ENCODE measurements at regions of chr14 and their contacts with region 1.

Region 1: DNA sequence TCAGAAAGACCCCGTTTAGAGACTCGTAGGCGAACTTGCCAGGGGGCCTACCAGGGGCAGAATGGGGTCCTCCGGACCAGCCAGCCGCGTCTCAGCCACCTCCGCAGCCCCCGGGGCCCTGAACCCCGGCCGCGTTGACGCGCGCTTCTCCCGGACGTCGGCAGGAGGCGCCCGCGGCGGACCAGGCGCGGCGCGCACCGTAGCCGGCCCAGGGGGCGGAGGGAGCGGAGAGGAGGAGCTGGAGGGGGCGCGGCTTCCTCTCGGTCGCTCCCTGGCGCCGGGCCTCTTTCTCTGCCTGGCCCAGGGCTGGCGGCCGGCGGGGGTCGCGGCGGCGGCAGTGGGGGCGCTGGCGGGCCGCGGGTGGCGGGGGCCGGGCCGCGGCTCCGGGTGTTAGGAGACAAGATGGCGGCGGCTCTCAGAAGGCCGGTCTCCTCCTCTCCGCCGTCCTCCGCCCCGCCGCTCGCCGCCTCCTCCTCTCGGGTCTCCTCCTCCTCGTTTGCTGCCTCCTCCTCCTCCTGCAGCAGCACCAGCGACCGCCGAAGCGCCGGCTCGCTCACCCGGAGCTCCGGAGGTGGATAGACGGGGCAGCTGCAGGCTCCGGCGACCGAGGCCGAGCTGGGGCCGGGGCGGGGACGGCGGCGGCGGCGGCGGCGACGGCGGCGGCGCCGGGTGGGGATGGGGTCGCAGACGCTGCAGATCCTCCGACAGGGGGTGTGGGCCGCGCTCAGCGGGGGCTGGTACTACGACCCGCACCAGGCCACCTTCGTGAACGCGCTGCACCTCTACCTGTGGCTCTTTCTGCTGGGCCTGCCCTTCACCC is at the start of gene PCNX1:
- DNase-seq: peak; percentile 85 to 87
- ATAC-seq: peak; percentile 85
- H3K4me3 ChIP-seq: peak within 1 kb of the TSS; percentile 89
- H3K27ac ChIP-seq: peak within 1 kb of the TSS; percentile 95
- H3K4me1 ChIP-seq: peaks cover 19% of the 10 kb centered on the region
- CTCF ChIP-seq: peak; percentile 89
- EP300 ChIP-seq: no peak
- POLR2A ChIP-seq: peak; percentile 55
- RAD21 ChIP-seq: peak; percentile 29 to 71; a peak in 4 of 5 replicates
- polyA plus RNA-seq, gene PCNX1: 45.0 and 50.0 TPM in 2 replicates

Region 2: GRCh38 chr14:70152704-70153103 is 754.7 kb before region 1 on chr14:
- CTCF ChIA-PET with region 1: no interaction called
- POLR2A ChIA-PET with region 1: no interaction called
- DNase-seq: no peak
- ATAC-seq: no peak
- H3K4me3 ChIP-seq: no peak overlapping the region
- H3K27ac ChIP-seq: no peak overlapping the region
- H3K4me1 ChIP-seq: no peaks in the 10 kb centered on the region
- CTCF ChIP-seq: no peak
- EP300 ChIP-seq: no peak
- POLR2A ChIP-seq: no peak
- RAD21 ChIP-seq: no peak

Region 3: DNA sequence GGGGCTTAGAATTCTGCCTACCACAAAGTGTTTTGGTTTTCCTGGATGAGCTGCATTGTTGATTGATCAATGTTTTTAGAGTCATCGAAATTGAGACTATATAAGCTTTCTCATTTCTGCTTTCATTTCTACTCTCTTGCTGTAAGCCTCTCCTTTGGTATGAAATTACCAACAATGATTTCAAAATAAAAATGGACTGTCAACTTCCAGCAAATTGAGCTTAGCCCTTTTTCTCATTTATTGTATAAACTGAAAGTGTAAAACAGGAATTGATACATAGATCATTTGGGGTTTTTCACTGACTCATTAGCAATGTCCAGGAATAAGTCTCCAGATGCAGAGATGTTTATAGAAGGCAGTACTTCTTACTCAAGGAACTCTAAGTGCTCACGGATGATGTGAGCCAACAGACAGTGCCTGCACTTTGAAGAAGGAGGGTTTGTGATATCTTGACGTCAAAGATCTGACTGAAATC is 20.1 kb before region 1 on chr14:
- CTCF ChIA-PET with region 1: interaction called, 16 read pairs
- POLR2A ChIA-PET with region 1: interaction called, 4 read pairs
- DNase-seq: no peak
- ATAC-seq: no peak
- H3K4me3 ChIP-seq: no peak overlapping the region
- H3K27ac ChIP-seq: no peak overlapping the region; a peak in 1 of 6 replicates
- H3K4me1 ChIP-seq: no peaks in the 10 kb centered on the region
- CTCF ChIP-seq: no peak
- EP300 ChIP-seq: no peak
- POLR2A ChIP-seq: no peak
- RAD21 ChIP-seq: no peak

Region 4: DNA sequence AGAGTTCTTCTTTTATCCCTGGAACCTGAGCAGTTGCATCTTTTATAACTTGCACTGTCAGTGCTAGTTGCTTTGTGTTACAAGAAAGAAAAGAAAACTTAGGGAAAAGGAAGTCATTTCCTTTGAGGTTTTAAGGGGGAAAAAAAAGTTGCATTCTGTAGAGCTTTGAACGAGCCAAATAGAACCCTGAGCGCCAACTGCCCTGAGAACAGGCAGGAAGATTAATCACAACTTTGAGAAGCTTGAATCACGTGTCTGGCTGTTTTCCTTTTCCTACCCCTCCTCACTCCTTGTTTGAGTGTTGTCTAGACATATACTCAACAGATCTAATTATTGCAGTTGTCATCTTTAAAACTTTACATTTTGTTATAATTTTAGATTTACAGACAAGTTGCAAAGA is 12.4 kb after region 1 on chr14:
- CTCF ChIA-PET with region 1: interaction called, 18 read pairs
- POLR2A ChIA-PET with region 1: interaction called, 13 read pairs
- DNase-seq: no peak
- ATAC-seq: no peak
- H3K4me3 ChIP-seq: no peak overlapping the region
- H3K27ac ChIP-seq: no peak overlapping the region
- H3K4me1 ChIP-seq: peaks cover 29% of the 10 kb centered on the region
- CTCF ChIP-seq: no peak
- EP300 ChIP-seq: no peak
- POLR2A ChIP-seq: no peak
- RAD21 ChIP-seq: no peak

Region 5: DNA sequence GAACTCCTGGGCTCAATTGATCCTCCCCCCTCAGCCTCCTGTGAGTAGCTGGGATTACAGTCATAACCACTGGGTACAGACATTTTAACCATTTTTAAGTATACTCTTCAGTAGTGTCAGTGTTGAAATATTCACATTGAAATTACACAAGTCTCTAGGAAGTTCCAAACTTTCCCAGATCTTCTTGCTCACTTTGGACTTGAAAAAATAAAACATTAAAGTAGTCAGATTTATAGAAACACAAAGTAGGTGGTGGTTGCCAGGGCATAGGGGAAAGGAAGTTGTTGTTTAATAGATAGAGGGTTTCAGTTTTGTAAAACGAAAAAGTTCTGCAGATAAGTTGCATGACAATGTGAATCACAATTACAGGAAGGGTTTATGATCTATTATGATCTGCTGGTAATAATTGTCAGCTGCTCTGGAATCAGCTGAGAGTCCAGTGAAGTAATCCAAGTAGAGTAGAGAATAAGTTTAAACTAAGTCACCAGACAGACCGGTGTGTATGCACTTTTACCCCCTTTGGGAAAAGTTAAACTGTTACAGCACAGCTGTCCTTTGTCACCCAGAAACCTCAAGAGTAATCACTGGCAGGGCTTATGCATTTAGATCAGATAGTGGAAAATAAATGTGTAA is 27.2 kb after region 1 on chr14:
- CTCF ChIA-PET with region 1: interaction called, 13 read pairs
- POLR2A ChIA-PET with region 1: no interaction called
- DNase-seq: no peak
- ATAC-seq: peak; percentile 34 to 36; a peak in 2 of 6 replicates
- H3K4me3 ChIP-seq: no peak overlapping the region
- H3K27ac ChIP-seq: no peak overlapping the region
- H3K4me1 ChIP-seq: peaks cover 21% of the 10 kb centered on the region
- CTCF ChIP-seq: no peak
- EP300 ChIP-seq: no peak
- POLR2A ChIP-seq: no peak
- RAD21 ChIP-seq: no peak

Region 6: GRCh38 chr14:70947711-70948110 is 40.3 kb after region 1 on chr14:
- CTCF ChIA-PET with region 1: interaction called, 17 read pairs
- POLR2A ChIA-PET with region 1: no interaction called
- DNase-seq: no peak
- ATAC-seq: no peak
- H3K4me3 ChIP-seq: no peak overlapping the region
- H3K27ac ChIP-seq: no peak overlapping the region
- H3K4me1 ChIP-seq: no peaks in the 10 kb centered on the region
- CTCF ChIP-seq: no peak
- EP300 ChIP-seq: no peak
- POLR2A ChIP-seq: no peak
- RAD21 ChIP-seq: no peak

Region 7: DNA sequence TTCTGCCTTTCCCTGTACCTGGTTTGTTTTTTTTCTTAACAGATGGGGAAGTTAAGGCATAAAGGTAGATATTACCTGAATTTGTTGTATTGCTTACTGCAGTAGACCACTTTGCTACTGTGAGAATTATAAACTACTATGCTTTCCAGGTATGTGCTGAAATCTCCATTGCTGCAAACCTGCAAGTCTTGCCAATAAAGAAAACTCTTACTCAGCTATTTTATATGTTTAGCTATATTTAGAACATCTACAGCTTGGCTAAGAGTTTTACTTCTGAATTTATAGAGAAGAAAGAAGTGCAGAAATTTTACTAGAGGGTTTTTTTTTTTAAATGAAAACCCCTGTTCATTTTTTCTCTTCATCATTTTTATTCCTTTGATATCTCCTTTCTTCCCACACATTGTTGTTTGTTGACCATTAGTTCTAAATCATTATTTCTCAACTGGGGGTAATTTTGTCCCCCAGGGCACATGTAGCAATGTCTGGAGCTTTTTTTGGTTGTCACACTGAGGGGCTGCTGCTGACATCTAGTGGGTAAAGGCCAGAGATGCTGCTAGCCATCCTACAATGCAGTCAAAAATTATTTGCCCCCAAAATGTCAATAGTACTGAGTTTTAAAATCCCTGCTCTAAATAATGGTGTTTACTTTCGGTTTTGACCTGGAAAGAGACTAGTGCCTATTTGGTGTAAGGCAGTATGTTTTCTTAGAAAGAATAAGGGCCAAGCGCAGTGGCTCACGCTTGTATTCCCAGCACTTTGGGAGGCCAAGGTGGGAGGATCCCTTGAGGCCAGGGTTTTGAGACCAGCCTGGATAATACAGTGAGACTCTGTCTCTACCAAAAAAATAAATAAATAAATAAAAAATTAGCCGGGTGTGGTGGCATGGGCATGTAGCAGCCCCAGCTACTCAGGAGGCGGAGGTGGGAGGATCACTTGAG is 48.4 kb after region 1 on chr14:
- CTCF ChIA-PET with region 1: interaction called, 32 read pairs
- POLR2A ChIA-PET with region 1: interaction called, 4 read pairs
- DNase-seq: peak in 1 of 2 experiments; percentile 23
- ATAC-seq: peak; percentile 71 to 79; a peak in 5 of 6 replicates
- H3K4me3 ChIP-seq: no peak overlapping the region
- H3K27ac ChIP-seq: no peak overlapping the region
- H3K4me1 ChIP-seq: peaks cover 6% of the 10 kb centered on the region; the same call in 1 of the 3 replicates
- CTCF ChIP-seq: peak; percentile 66
- EP300 ChIP-seq: no peak
- POLR2A ChIP-seq: no peak
- RAD21 ChIP-seq: peak; percentile 72 to 75

Region 8: DNA sequence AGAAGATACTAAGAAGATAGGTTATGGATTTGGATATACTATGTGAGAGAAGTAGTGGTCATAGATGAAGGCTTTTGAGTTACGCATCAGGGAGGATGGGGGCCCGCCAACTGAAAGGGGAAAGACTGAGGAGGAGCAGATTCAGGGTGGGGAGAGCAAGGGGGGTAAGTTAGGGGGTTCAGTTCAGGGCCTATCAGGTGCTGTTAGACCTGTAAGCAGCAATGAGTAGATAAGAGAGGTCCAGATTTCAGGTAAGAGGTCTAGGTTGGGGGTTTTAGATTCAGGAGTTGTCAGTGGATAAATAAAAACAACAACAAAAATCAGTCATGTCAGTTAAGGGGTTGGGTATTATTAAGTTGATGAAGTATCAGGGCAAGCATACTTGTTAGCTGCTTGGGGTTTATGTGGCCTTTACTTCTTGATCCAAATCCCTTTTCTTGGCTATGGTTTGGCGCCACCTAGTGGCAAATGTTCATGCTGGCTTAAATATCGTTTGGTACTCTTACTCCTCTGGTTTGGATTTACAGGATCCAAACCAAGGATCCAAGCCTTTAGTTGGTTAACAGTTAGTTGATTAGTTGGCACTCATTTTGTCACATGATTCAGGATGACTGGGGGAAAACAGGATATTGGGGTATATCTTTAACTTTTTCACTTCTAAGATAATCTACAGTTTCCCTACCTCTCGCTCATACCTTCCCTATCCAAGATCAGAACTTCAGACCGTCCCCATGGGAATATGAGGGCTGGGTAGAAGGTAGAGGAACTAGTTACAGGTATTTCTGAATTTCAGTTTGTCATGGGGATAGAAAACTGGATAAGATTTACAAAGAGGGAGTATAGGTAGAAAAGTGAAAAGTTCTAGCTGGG is 65.0 kb after region 1 on chr14:
- CTCF ChIA-PET with region 1: interaction called, 23 read pairs
- POLR2A ChIA-PET with region 1: no interaction called
- DNase-seq: peak; percentile 21 to 86
- ATAC-seq: peak; percentile 94 to 97
- H3K4me3 ChIP-seq: no peak overlapping the region
- H3K27ac ChIP-seq: no peak overlapping the region
- H3K4me1 ChIP-seq: 0 out of 3 replicates have a peak, but pooled peaks cover under 1% of the 10 kb centered on the region
- CTCF ChIP-seq: peak; percentile 95
- EP300 ChIP-seq: no peak
- POLR2A ChIP-seq: no peak
- RAD21 ChIP-seq: peak; percentile 80 to 87

Region 9: DNA sequence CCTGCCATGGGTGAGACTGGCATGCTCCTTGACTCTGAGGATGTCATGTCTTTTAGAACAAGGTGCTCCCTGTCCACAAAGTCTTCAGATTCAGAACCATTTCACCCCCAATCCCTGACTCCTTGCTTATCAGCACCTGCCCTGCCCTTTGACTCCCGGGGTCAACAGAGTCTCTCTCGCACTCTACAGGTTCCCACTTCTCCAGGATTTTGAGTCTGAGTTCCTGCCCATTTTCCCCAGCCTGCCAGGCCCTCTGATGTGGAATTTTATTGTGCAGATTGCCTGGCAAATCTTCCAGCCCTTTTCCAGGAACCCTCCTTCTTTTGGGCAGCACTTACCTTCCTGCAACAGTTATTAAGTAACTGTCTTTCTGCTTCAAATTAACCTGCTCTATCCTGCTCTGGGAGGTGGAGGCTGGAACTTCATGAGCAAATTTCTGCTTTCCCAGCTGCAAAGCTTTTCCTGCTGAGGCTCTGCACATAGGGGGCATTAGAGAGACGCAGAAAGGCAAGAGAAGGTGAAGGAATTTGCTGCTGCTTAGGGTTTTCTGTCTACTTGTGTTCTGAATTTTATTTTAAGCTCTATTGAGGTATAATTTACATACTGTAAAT is 258.9 kb after region 1 on chr14:
- CTCF ChIA-PET with region 1: no interaction called
- POLR2A ChIA-PET with region 1: no interaction called
- DNase-seq: peak; percentile 30 to 55
- ATAC-seq: peak; percentile 69 to 74
- H3K4me3 ChIP-seq: no peak overlapping the region
- H3K27ac ChIP-seq: no peak overlapping the region
- H3K4me1 ChIP-seq: 0 out of 3 replicates have a peak, but pooled peaks cover 7% of the 10 kb centered on the region
- CTCF ChIP-seq: peak; percentile 30; the same call in 2 of the 3 replicates
- EP300 ChIP-seq: no peak
- POLR2A ChIP-seq: no peak
- RAD21 ChIP-seq: peak; percentile 43 to 59; a peak in 4 of 5 replicates